ENCODE measurements at regions of chr4 and their contacts with region 1.

Region 1: GRCh38 chr4:184733654-184734524 is at the start of gene CENPU:
- DNase-seq: peak; percentile 96
- ATAC-seq: peak; percentile 95
- H3K4me3 ChIP-seq: peak within 1 kb of the TSS; percentile 65 to 76 (median 72)
- H3K4me3 Mint-ChIP-seq: peak within 1 kb of the TSS; percentile 93
- H3K27ac ChIP-seq: peak within 1 kb of the TSS; percentile 1 to 52
- H3K27ac Mint-ChIP-seq: peak within 1 kb of the TSS; percentile 93
- H3K4me1 ChIP-seq: peaks cover 7 to 12% of the 10 kb centered on the region in 2 donors
- H3K4me1 Mint-ChIP-seq: peaks cover 16% of the 10 kb centered on the region
- H3K27me3 ChIP-seq: no peaks in the 10 kb centered on the region
- H3K27me3 Mint-ChIP-seq: no peaks in the 10 kb centered on the region
- CTCF ChIP-seq: no peak
- total RNA-seq, gene CENPU: 1.6 and 3.2 TPM in 2 replicates

Region 2: DNA sequence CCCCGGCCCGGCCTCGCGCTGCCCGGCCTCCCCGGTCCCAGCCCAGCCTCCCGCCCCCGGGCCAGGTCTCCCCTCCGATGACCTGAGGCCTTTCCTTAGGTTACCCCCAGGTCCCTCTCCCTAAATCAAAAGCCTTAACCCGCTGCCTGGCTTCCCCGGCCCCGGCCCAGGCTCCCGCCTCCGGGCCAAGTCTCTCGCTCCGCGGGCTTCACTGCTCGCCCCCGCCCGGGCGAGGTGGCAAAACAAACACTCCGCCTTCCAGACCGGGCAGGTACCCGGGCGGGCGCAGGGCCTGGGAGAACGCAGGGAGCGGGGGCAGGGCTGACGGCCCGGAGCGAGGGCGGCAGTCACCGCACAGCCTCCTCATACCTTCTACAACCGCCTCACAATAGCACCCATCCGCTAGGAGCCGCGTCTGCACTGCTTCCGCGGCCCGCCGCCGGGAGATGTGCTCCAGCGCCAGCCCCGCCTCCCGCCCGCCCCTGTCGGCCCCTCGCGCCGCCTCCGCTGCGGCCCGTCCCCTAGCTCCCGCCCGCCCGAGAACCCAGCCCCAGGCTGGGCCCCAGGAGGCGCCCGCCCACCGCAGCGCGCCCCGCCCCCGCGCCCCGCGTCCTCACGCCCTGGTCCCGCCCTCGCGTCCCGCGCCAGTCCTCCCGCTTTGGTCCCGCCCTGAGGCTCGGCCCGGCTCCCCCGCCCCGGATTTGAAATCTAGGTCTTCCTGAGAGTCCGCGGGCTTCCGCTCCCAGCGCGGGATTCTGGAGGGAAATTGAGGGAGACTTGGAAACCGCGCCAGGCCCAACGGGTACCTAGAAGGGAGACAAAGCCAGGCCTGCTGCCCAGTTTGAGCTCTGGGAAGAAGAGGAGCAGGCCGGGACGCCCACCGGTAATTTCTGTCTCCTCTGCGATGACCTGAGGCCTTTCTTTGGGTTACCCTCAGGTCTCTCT is 84.6 kb before region 1 on chr4 and contains the starts of genes CASP3 and PRIMPOL:
- CTCF ChIA-PET with region 1: interaction called, 9 read pairs
- POLR2A ChIA-PET with region 1: interaction called, 23 read pairs
- intact Hi-C with region 1: loop called (anchors 1 kb)
- DNase-seq: peak; percentile 97
- ATAC-seq: peak; percentile 95
- H3K4me3 ChIP-seq: peak within 1 kb of the TSS; percentile 75 to 95 (median 89)
- H3K4me3 Mint-ChIP-seq: peak within 1 kb of the TSS; percentile 94
- H3K27ac ChIP-seq: peak within 1 kb of the TSS; percentile 71 to 95
- H3K27ac Mint-ChIP-seq: peak within 1 kb of the TSS; percentile 94
- H3K4me1 ChIP-seq: peaks cover 24 to 29% of the 10 kb centered on the region in 2 donors
- H3K4me1 Mint-ChIP-seq: peaks cover 44% of the 10 kb centered on the region
- H3K27me3 ChIP-seq: no peaks in the 10 kb centered on the region
- H3K27me3 Mint-ChIP-seq: no peaks in the 10 kb centered on the region
- CTCF ChIP-seq: peak; percentile 18
- total RNA-seq, gene CASP3: 15.8 and 16.8 TPM in 2 replicates
- total RNA-seq, gene PRIMPOL: 15.4 and 21.5 TPM in 2 replicates